ENCODE measurements at regions of chr11 and their contacts with region 1.

Region 1: GRCh38 chr11:33015621-33016551 is at the start of gene DEPDC7:
- DNase-seq: peak; percentile 89
- ATAC-seq: peak; percentile 91
- H3K4me3 ChIP-seq: peak within 1 kb of the TSS; percentile 73 to 79 (median 75)
- H3K27ac ChIP-seq: peak within 1 kb of the TSS; percentile 86
- H3K4me1 ChIP-seq: peaks cover 73% of the 10 kb centered on the region
- H3K27me3 ChIP-seq: no peaks in the 10 kb centered on the region
- CTCF ChIP-seq: no peak; the same call in 1 of the 2 replicates
- EP300 ChIP-seq: no peak; a peak in 1 of 4 replicates
- POLR2A ChIP-seq: peak; percentile 81 to 92
- RAD21 ChIP-seq: peak; percentile 44
- total RNA-seq, gene DEPDC7: 33.3 and 37.9 TPM in 2 replicates

Region 2: GRCh38 chr11:32792948-32793475 is 222.9 kb before region 1 on chr11:
- CTCF ChIA-PET with region 1: no interaction called
- POLR2A ChIA-PET with region 1: no interaction called
- in situ Hi-C with region 1: no loop called
- intact Hi-C with region 1: no loop called
- DNase-seq: peak; percentile 21
- ATAC-seq: peak; percentile 78
- H3K4me3 ChIP-seq: peak overlapping the region in 1 of 3 experiments; percentile 10; a peak in 1 of 6 replicates
- H3K27ac ChIP-seq: no peak overlapping the region
- H3K4me1 ChIP-seq: no peaks in the 10 kb centered on the region
- H3K27me3 ChIP-seq: peaks cover 0 to 5% of the 10 kb centered on the region in 2 experiments; a peak in 2 of 5 replicates
- CTCF ChIP-seq: peak; percentile 77
- EP300 ChIP-seq: no peak
- POLR2A ChIP-seq: no peak
- RAD21 ChIP-seq: peak; percentile 50; the same call in 1 of the 2 replicates

Region 3: DNA sequence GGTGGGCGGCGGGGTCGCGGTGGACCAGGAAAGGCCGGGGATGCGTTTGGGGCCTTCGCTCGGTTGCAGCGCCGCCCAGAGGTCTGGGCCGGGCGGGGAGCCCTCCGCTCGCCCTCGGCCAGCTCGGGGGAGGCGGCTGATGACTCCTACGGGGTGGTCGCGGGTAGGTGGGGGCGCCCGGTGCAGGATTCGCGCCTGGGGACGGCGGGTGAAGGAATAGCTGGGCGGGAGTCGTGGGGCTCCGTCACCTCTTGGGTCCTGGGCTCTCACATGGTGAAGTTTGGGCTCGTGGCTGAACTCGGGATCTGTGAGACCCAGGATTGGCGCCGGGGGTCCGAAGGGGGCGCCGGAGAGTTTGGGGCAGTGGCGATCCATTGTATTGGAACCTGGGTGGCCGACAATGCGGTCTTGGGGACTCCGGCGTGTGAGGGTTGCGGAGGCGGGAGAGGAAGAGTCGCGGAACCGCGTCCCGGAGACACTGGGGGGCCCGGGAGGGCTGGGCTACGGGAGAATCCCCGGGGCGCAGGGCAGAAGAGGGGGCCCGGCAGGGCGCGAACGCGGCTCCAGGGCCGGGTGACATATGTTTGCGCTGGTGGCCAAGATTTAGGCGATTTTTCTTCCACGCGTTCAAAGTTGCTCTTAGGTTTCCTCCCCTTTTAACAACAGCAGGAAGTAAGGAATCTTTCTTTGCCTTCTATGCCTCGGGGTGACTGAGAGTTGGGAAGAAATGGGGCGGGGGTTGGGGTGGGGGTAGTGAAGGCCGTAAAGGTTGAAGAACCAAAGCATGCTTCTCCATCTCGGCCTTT is 122.3 kb before region 1 on chr11:
- CTCF ChIA-PET with region 1: no interaction called
- POLR2A ChIA-PET with region 1: no interaction called
- in situ Hi-C with region 1: no loop called
- intact Hi-C with region 1: loop called (anchors 1 kb)
- DNase-seq: peak; percentile 58
- ATAC-seq: peak; percentile 77
- H3K4me3 ChIP-seq: peak overlapping the region; percentile 73 to 98 (median 93)
- H3K27ac ChIP-seq: peak overlapping the region; percentile 88
- H3K4me1 ChIP-seq: peaks cover 24% of the 10 kb centered on the region
- H3K27me3 ChIP-seq: peaks cover 0 to 3% of the 10 kb centered on the region in 2 experiments; a peak in 1 of 5 replicates
- CTCF ChIP-seq: peak; percentile 72
- EP300 ChIP-seq: no peak
- POLR2A ChIP-seq: no peak
- RAD21 ChIP-seq: no peak; the same call in 1 of the 2 replicates

Region 4: DNA sequence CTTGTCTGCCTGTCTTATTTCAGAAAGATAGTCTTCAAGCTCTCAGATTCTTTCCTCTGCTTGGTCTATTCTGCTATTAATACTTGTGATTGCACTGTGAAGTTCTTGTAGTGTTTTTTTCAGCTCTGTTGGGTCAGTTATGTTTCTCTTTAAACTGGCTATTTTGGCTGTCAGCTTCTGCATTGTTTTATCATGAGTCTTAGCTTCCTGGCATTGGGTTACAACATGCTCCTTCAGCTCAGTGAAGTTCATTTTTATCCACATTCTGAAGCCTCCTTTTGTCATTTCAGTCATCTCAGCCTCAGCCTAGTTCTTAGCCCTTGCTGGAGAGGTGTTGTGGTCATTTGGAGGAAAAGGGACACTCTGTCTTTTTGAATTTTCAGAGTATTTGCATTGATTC is 15.7 kb before region 1 on chr11:
- CTCF ChIA-PET with region 1: no interaction called
- POLR2A ChIA-PET with region 1: interaction called, 10 read pairs
- in situ Hi-C with region 1: no loop called
- intact Hi-C with region 1: no loop called
- DNase-seq: no peak
- ATAC-seq: no peak
- H3K4me3 ChIP-seq: no peak overlapping the region
- H3K27ac ChIP-seq: no peak overlapping the region
- H3K4me1 ChIP-seq: peaks cover 11% of the 10 kb centered on the region; the same call in 1 of the 2 replicates
- H3K27me3 ChIP-seq: no peaks in the 10 kb centered on the region
- CTCF ChIP-seq: no peak
- EP300 ChIP-seq: no peak
- POLR2A ChIP-seq: no peak
- RAD21 ChIP-seq: no peak

Region 5: GRCh38 chr11:33039274-33040032 is 23.6 kb after region 1 on chr11 and contains the start of gene TCP11L1:
- CTCF ChIA-PET with region 1: no interaction called
- POLR2A ChIA-PET with region 1: interaction called, 65 read pairs
- in situ Hi-C with region 1: no loop called
- intact Hi-C with region 1: loop called (anchors 1 kb)
- DNase-seq: peak; percentile 83
- ATAC-seq: peak; percentile 92
- H3K4me3 ChIP-seq: peak within 1 kb of the TSS; percentile 74 to 90 (median 78)
- H3K27ac ChIP-seq: peak within 1 kb of the TSS; percentile 97
- H3K4me1 ChIP-seq: peaks cover 46% of the 10 kb centered on the region
- H3K27me3 ChIP-seq: no peaks in the 10 kb centered on the region
- CTCF ChIP-seq: peak; percentile 60
- EP300 ChIP-seq: no peak
- POLR2A ChIP-seq: peak; percentile 47 to 54; a peak in 2 of 4 replicates
- RAD21 ChIP-seq: 0 out of 2 replicates have a peak, but pooled peaks have one; percentile 10
- total RNA-seq, gene TCP11L1: 10.1 and 14.0 TPM in 2 replicates

Region 6: GRCh38 chr11:33065445-33066178 is 49.7 kb after region 1 on chr11:
- CTCF ChIA-PET with region 1: no interaction called
- POLR2A ChIA-PET with region 1: interaction called, 19 read pairs
- in situ Hi-C with region 1: no loop called
- intact Hi-C with region 1: no loop called
- DNase-seq: peak; percentile 50
- ATAC-seq: peak; percentile 94
- H3K4me3 ChIP-seq: no peak overlapping the region
- H3K27ac ChIP-seq: no peak overlapping the region
- H3K4me1 ChIP-seq: peaks cover 18% of the 10 kb centered on the region
- H3K27me3 ChIP-seq: no peaks in the 10 kb centered on the region; a peak in 1 of 5 replicates
- CTCF ChIP-seq: peak; percentile 96
- EP300 ChIP-seq: no peak
- POLR2A ChIP-seq: no peak
- RAD21 ChIP-seq: peak; percentile 93